ENCODE measurements at regions of chr14 and their contacts with region 1.

Region 1: GRCh38 chr14:21248739-21249411 is 20.4 kb downstream of the HNRNPC start:
- DNase-seq: no peak
- H3K4me3 Mint-ChIP-seq: no peak overlapping the region
- H3K27ac Mint-ChIP-seq: no peak overlapping the region
- H3K4me1 Mint-ChIP-seq: peaks cover 70% of the 10 kb centered on the region
- H3K27me3 Mint-ChIP-seq: no peaks in the 10 kb centered on the region

Region 2: GRCh38 chr14:21233457-21234076 is 15.3 kb before region 1 on chr14:
- CTCF ChIA-PET with region 1: interaction called, 7 read pairs
- intact Hi-C with region 1: loop called (anchors 2 kb)
- DNase-seq: peak; percentile 21
- H3K4me3 Mint-ChIP-seq: peak overlapping the region; percentile 16
- H3K27ac Mint-ChIP-seq: peak overlapping the region; percentile 69
- H3K4me1 Mint-ChIP-seq: peaks cover 88% of the 10 kb centered on the region
- H3K27me3 Mint-ChIP-seq: no peaks in the 10 kb centered on the region

Measured in activated naive CD4-positive, alpha-beta T cell treated with anti-CD3 and anti-CD28 coated beads for 36 hours (primary cell).